Heart left ventricle (tissue), 16 donors: ENCODE measurements at regions of chr2 and their contacts with region 1.

Region 1: DNA sequence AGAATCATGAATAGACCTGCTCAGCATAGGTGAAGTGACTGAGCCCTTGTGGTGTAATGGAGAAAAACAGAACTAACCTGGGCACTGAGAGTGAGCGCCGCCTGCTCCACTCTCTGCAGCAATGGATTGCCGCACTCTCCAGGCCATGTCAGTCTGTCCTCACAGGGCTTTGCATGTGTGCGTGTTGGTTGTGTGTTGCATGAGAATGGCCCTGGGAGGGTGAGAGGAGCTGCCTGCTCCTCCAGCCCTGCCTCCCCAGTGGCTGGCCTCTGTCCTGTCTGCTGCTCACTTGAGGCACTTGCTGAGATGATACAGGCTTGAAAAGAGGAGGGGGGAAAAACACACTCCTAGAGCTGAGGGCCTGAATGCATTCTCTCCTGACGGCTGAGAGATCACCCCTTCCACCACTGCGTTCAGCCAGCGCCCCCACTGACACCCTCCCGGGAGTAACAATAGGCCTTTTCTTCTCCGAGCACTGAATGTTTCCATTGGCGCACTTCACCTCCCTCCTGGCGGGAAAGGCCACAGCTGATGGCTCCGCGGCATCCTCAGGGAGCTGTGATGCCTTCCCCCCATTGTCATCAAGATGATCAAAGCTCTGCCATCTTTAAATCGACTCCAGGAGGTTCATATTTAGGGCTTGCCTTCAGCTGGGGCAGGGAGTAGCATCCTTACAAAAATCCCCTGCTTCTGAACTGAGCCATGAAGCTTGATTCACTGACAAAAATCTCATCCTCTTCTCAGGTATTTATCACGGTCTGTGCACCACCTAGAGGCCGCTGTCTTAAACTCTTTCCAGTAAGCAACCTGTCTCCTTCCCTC is 49.9 kb upstream of the DAPL1 start:
- DNase-seq: peak in 4 of 5 donors; percentile 39 to 56 (median 44)
- ATAC-seq: peak; percentile 44 to 67 (median 60)
- H3K4me3 ChIP-seq: no peak overlapping the region
- H3K27ac ChIP-seq: peak overlapping the region in 3 of 12 donors; percentile 1 to 61 (median 20)
- H3K4me1 ChIP-seq: peaks cover 3 to 69% (median 32%) of the 10 kb centered on the region in 12 donors
- H3K27me3 ChIP-seq: no peaks in the 10 kb centered on the region
- CTCF ChIP-seq: peak; percentile 28 to 66 (median 54)
- POLR2A ChIP-seq: no peak

Region 2: GRCh38 chr2:158024288-158024898 is 720.9 kb before region 1 on chr2:
- intact Hi-C with region 1: loop called in 5 of 10 experiments (anchors 2 to 10 kb)
- DNase-seq: peak in 3 of 5 donors; percentile 19 to 43 (median 39)
- ATAC-seq: peak in 2 of 4 donors; percentile 45 to 62
- H3K4me3 ChIP-seq: no peak overlapping the region
- H3K27ac ChIP-seq: no peak overlapping the region
- H3K4me1 ChIP-seq: no peaks in the 10 kb centered on the region
- H3K27me3 ChIP-seq: no peaks in the 10 kb centered on the region
- CTCF ChIP-seq: peak; percentile 74 to 92 (median 84)
- POLR2A ChIP-seq: no peak

Region 3: DNA sequence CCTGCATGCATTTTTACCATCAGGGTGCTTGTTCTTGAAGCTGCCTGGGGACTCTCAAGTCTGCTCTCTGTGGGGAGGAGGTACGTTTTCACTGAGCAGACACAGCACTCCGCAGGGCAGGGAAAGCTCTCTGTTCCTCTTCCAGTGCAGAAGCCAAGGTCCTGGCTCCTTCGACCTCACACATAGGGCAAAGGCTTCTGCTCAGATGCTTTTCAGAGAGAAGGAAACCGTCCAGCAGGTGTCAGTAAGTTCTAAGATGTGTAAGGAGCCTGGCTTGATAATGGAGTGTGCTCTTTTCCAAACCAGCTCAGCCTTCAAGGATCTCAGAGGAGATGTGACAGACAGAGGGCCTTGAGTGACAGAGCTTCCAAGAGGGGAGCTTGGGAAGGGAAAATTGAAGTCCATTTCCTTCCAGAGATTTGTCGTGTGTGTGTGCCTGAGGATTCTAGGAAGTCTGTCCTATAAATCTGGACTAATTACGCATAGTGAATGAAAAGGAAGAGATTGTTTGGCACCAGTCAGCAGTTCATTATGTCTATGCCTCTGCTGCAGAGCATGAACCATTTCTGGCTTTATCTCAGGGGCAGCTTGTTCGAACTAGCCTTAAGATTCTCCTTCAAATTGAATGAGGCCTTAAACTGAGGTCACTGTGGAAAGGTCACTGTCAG is 710.9 kb before region 1 on chr2:
- intact Hi-C with region 1: loop called in 5 of 10 experiments (anchors 5 to 10 kb)
- DNase-seq: peak in 2 of 5 donors; percentile 19 to 29
- ATAC-seq: peak in 3 of 4 donors; percentile 73 to 79 (median 77)
- H3K4me3 ChIP-seq: no peak overlapping the region
- H3K27ac ChIP-seq: no peak overlapping the region
- H3K4me1 ChIP-seq: peaks cover 0 to 5% (median 0%) of the 10 kb centered on the region in 12 donors
- H3K27me3 ChIP-seq: no peaks in the 10 kb centered on the region
- CTCF ChIP-seq: peak; percentile 32 to 63 (median 42)
- POLR2A ChIP-seq: no peak

Region 4: GRCh38 chr2:158179660-158180059 is 565.6 kb before region 1 on chr2:
- intact Hi-C with region 1: loop called in 9 of 10 experiments (anchors 2 to 5 kb)
- DNase-seq: no peak
- ATAC-seq: peak in 2 of 4 donors; percentile 27 to 60
- H3K4me3 ChIP-seq: no peak overlapping the region
- H3K27ac ChIP-seq: no peak overlapping the region
- H3K4me1 ChIP-seq: peaks cover 0 to 7% (median 0%) of the 10 kb centered on the region in 12 donors
- H3K27me3 ChIP-seq: no peaks in the 10 kb centered on the region
- CTCF ChIP-seq: peak in 11 of 12 donors; percentile 21 to 67 (median 44)
- POLR2A ChIP-seq: no peak

Region 5: GRCh38 chr2:158667586-158667985 is 77.7 kb before region 1 on chr2:
- intact Hi-C with region 1: loop called in 7 of 10 experiments (anchors 5 to 10 kb)
- DNase-seq: no peak
- ATAC-seq: peak in 3 of 4 donors; percentile 50 to 68 (median 55)
- H3K4me3 ChIP-seq: no peak overlapping the region
- H3K27ac ChIP-seq: peak overlapping the region in 11 of 12 donors; percentile 10 to 76 (median 57)
- H3K4me1 ChIP-seq: peaks cover 4 to 66% (median 38%) of the 10 kb centered on the region in 12 donors
- H3K27me3 ChIP-seq: no peaks in the 10 kb centered on the region
- CTCF ChIP-seq: no peak
- POLR2A ChIP-seq: no peak

Region 6: DNA sequence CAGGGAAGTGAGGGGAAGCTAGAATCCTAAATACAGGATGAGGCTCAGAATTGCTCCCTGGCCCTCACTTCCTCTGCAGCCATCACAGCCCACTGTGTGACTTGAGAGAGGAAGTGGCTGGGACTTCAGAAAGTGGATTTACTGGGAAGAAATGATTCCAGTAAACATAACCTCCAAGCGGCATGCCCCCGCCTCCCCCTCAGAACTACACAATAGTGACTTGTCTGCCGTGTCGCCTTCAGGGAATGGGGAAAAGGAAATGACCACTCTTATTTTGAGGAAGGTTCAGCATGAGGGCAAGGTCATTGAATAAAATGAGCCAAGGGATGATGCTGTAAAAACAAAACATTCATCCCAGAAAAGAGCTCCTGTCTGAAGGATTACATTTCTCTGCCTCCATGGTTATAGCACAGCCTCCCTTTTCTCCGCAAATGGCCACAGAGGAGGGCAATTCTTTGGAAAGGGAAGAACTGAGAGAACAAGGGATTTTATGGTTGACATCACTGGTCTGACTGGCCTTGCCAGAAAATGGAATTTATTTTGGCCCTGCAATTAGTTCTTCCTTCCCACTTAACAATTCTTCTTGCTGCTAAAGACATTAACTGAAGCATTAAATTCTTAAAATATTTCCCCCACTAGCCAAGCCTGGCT is 29.0 kb before region 1 on chr2:
- intact Hi-C with region 1: loop called in 1 of 10 experiments (anchors 2 kb)
- DNase-seq: peak; percentile 67 to 84 (median 78)
- ATAC-seq: peak; percentile 75 to 91 (median 86)
- H3K4me3 ChIP-seq: no peak overlapping the region
- H3K27ac ChIP-seq: peak overlapping the region; percentile 51 to 88 (median 78)
- H3K4me1 ChIP-seq: peaks cover 0 to 48% (median 32%) of the 10 kb centered on the region in 12 donors
- H3K27me3 ChIP-seq: no peaks in the 10 kb centered on the region
- CTCF ChIP-seq: no peak
- POLR2A ChIP-seq: no peak